Gastrocnemius medialis (tissue), 4 donors: ENCODE measurements at regions of chr3 and their contacts with region 1.

Region 1: GRCh38 chr3:57755668-57756527 is at the start of gene SLMAP:
- DNase-seq: peak; percentile 98 to 99
- ATAC-seq: peak; percentile 94 to 95
- H3K4me3 ChIP-seq: peak within 1 kb of the TSS; percentile 86 to 98 (median 96)
- H3K27ac ChIP-seq: peak within 1 kb of the TSS; percentile 96 to 99 (median 98)
- H3K4me1 ChIP-seq: peaks cover 32 to 37% of the 10 kb centered on the region in 2 donors
- H3K27me3 ChIP-seq: no peaks in the 10 kb centered on the region
- CTCF ChIP-seq: peak in 2 of 5 experiments; percentile 4 to 10
- POLR2A ChIP-seq: peak; percentile 80 to 86
- total RNA-seq, gene SLMAP: 81.1 to 113 (median 97.1) TPM

Region 2: DNA sequence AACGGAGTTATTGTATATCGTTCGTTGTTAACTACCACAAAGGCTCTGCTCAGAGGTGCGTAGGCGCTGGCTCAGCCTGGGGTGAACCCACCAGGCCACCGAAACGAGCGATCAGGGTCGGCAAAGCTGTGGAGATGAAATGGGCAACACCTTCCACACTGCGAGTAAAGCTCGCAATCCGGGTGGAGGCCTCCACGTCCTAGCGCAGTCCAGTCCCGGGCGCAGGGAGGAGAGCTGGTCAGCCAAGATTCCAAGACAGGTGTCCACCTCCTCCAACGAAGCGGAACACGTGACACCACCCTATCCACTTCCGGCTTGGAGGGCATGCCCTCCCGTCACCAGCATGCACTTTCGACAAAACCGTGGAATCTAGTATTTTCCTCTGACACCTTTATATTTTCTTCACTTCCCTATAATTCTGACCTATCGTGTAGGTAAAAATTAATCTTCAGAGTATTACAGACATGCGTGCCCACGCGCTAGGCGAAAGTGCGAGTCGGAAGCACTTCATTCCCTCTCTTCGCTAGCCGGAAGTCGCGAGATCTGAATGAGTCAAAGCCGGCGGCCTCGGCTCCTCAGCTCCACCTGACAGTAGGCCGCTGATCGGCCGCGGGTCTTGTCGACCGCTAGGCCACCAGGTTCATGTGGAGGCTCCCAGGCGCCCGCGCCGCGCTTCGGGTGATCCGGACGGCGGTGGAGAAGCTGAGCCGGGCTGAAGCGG is 200.0 kb before region 1 on chr3 and contains the start of gene PDE12:
- in situ Hi-C with region 1: loop called in 1 of 4 experiments (anchors 10 kb)
- intact Hi-C with region 1: loop called (anchors 5 kb)
- DNase-seq: peak; percentile 82 to 85
- ATAC-seq: peak; percentile 96 to 98
- H3K4me3 ChIP-seq: peak within 1 kb of the TSS; percentile 75 to 94 (median 83)
- H3K27ac ChIP-seq: peak within 1 kb of the TSS; percentile 90 to 98 (median 94)
- H3K4me1 ChIP-seq: peaks cover 20 to 28% of the 10 kb centered on the region in 2 donors
- H3K27me3 ChIP-seq: no peaks in the 10 kb centered on the region
- CTCF ChIP-seq: no peak
- POLR2A ChIP-seq: peak; percentile 91 to 92
- total RNA-seq, gene PDE12: 16.5 to 25.7 (median 19.8) TPM

Region 3: DNA sequence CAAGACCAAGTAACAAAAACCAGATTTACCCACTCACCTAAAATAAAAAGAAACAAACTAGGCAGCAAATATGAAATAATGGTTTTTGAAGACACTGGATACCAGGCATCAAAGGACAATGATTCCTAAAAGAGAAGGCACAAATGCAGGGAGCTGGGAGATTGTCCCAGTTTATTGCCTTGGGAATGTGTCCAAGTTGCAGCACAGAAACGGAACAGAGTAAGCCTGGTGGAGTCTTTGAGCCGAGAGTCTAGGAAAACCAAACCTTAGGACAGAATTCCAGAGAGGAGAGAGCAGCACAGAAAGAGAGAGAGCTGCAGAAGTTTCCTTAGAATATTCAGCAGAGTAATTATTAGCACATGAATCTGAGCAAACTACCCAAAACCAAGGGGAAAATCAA is 150.9 kb before region 1 on chr3:
- in situ Hi-C with region 1: loop called in 1 of 4 experiments (anchors 5 kb)
- intact Hi-C with region 1: no loop called
- DNase-seq: no peak
- ATAC-seq: no peak
- H3K4me3 ChIP-seq: no peak overlapping the region
- H3K27ac ChIP-seq: no peak overlapping the region
- H3K4me1 ChIP-seq: no peaks in the 10 kb centered on the region
- H3K27me3 ChIP-seq: no peaks in the 10 kb centered on the region
- CTCF ChIP-seq: no peak
- POLR2A ChIP-seq: no peak

Region 4: GRCh38 chr3:57803647-57804081 is 47.8 kb after region 1 on chr3:
- in situ Hi-C with region 1: no loop called
- intact Hi-C with region 1: loop called (anchors 2 kb)
- DNase-seq: peak in 1 of 2 donors; percentile 25
- ATAC-seq: peak; percentile 83 to 86
- H3K4me3 ChIP-seq: no peak overlapping the region
- H3K27ac ChIP-seq: peak overlapping the region in 3 of 4 donors; percentile 46 to 54 (median 52)
- H3K4me1 ChIP-seq: peaks cover 47 to 57% of the 10 kb centered on the region in 2 donors
- H3K27me3 ChIP-seq: no peaks in the 10 kb centered on the region
- CTCF ChIP-seq: no peak
- POLR2A ChIP-seq: no peak